Naive thymus-derived CD4-positive, alpha-beta T cell (primary cell): ENCODE measurements at regions of chr1 and their contacts with region 1.

Region 1: DNA sequence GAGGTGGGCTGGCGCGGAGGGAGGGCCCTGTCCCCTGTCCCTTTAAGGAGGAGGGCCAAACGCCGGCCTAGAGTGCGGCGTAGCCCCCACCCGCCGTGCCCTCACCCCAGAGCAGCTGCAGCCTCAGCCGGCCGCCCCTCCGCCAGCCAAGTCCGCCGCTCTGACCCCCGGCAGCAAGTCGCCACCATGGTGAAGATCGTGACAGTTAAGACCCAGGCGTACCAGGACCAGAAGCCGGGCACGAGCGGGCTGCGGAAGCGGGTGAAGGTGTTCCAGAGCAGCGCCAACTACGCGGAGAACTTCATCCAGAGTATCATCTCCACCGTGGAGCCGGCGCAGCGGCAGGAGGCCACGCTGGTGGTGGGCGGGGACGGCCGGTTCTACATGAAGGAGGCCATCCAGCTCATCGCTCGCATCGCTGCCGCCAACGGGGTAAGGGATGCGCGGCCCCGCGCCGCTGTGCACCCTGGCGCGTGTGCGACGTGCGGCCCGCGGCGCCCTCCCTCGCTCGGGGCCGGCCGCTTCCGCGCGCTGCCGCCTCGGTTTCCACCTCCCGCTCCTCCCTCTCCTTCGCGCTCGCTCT is at the start of gene PGM1:
- DNase-seq: peak; percentile 63 to 81 (median 76)
- ATAC-seq: peak; percentile 91
- H3K4me3 ChIP-seq: peak within 1 kb of the TSS; percentile 71
- H3K4me3 Mint-ChIP-seq: peak within 1 kb of the TSS; percentile 96 to 99 (median 98)
- H3K27ac ChIP-seq: peak within 1 kb of the TSS; percentile 90
- H3K27ac Mint-ChIP-seq: peak within 1 kb of the TSS; percentile 95 to 99 (median 99)
- H3K4me1 ChIP-seq: peaks cover 0 to 7% of the 10 kb centered on the region in 2 donors
- H3K4me1 Mint-ChIP-seq: peaks cover 21 to 49% (median 40%) of the 10 kb centered on the region in 7 donors
- H3K27me3 ChIP-seq: no peaks in the 10 kb centered on the region
- H3K27me3 Mint-ChIP-seq: no peaks in the 10 kb centered on the region
- total RNA-seq, gene PGM1: 11.9 to 57.2 (median 16.1) TPM

Region 2: DNA sequence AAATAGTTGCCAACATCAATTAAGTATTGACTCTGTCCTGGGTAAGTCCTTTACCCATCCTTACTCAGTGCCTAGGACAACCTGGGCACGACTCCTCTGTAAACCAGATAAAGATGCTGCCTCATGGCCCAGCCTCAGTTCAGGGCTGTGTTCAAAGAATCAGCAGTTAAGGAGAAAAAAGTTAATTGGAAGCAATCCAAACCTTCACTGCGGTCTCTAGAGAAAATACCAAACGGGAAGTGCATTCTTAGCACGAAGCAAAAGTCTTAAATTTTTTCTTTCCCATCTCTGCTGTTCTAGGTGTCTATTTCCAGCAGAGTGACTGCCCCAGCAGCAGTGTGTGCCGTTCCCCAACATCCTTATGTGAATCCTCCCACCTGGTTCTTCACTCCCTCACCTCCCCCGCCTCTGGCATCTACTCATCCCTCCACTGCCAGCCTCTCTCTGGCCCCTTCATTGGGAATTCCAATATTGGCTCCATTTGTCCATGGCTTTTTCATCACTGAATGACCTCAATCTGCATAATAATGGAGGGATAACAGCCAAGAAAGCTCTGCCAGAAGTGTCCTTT is 1297.4 kb before region 1 on chr1:
- CTCF ChIA-PET with region 1: no interaction called
- POLR2A ChIA-PET with region 1: no interaction called
- intact Hi-C with region 1: loop called in 1 of 2 experiments (anchors 10 kb)
- DNase-seq: peak in 7 of 9 donors; percentile 10 to 67 (median 51)
- ATAC-seq: peak; percentile 78
- H3K4me3 ChIP-seq: no peak overlapping the region
- H3K4me3 Mint-ChIP-seq: peak overlapping the region in 9 of 10 donors; percentile 8 to 72 (median 64)
- H3K27ac ChIP-seq: no peak overlapping the region
- H3K27ac Mint-ChIP-seq: peak overlapping the region in 7 of 9 donors; percentile 4 to 79 (median 34)
- H3K4me1 ChIP-seq: peaks cover 0 to 11% of the 10 kb centered on the region in 2 donors
- H3K4me1 Mint-ChIP-seq: peaks cover 9 to 16% (median 13%) of the 10 kb centered on the region in 7 donors
- H3K27me3 ChIP-seq: no peaks in the 10 kb centered on the region
- H3K27me3 Mint-ChIP-seq: no peaks in the 10 kb centered on the region

Region 3: GRCh38 chr1:63367215-63368103 is 225.9 kb before region 1 on chr1 and contains the start of gene ALG6:
- CTCF ChIA-PET with region 1: no interaction called
- POLR2A ChIA-PET with region 1: interaction called, 3 read pairs
- intact Hi-C with region 1: loop called (anchors 1 kb)
- DNase-seq: peak; percentile 66 to 98 (median 84)
- ATAC-seq: peak; percentile 99
- H3K4me3 ChIP-seq: peak within 1 kb of the TSS; percentile 95
- H3K4me3 Mint-ChIP-seq: peak within 1 kb of the TSS; percentile 91 to 99 (median 94)
- H3K27ac ChIP-seq: peak within 1 kb of the TSS; percentile 72
- H3K27ac Mint-ChIP-seq: peak within 1 kb of the TSS; percentile 79 to 93 (median 84)
- H3K4me1 ChIP-seq: peaks cover 0 to 7% of the 10 kb centered on the region in 2 donors
- H3K4me1 Mint-ChIP-seq: peaks cover 23 to 46% (median 36%) of the 10 kb centered on the region in 7 donors
- H3K27me3 ChIP-seq: no peaks in the 10 kb centered on the region
- H3K27me3 Mint-ChIP-seq: peaks cover 0 to 7% (median 0%) of the 10 kb centered on the region in 5 donors
- total RNA-seq, gene ALG6: 16.1 to 29.8 (median 27.3) TPM

Region 4: GRCh38 chr1:63403386-63403785 is 190.0 kb before region 1 on chr1:
- CTCF ChIA-PET with region 1: no interaction called
- POLR2A ChIA-PET with region 1: no interaction called
- intact Hi-C with region 1: no loop called
- DNase-seq: no peak
- ATAC-seq: peak; percentile 70
- H3K4me3 ChIP-seq: no peak overlapping the region
- H3K4me3 Mint-ChIP-seq: no peak overlapping the region
- H3K27ac ChIP-seq: no peak overlapping the region
- H3K27ac Mint-ChIP-seq: no peak overlapping the region
- H3K4me1 ChIP-seq: no peaks in the 10 kb centered on the region
- H3K4me1 Mint-ChIP-seq: peaks cover 0 to 5% (median 0%) of the 10 kb centered on the region in 7 donors
- H3K27me3 ChIP-seq: no peaks in the 10 kb centered on the region
- H3K27me3 Mint-ChIP-seq: no peaks in the 10 kb centered on the region

Region 5: GRCh38 chr1:63522891-63523728 is 70.3 kb before region 1 on chr1 and contains the starts of genes EFCAB7 and ITGB3BP:
- CTCF ChIA-PET with region 1: no interaction called
- POLR2A ChIA-PET with region 1: interaction called, 3 read pairs
- intact Hi-C with region 1: loop called (anchors 1 kb)
- DNase-seq: peak; percentile 73 to 86 (median 82)
- ATAC-seq: peak; percentile 92
- H3K4me3 ChIP-seq: peak within 1 kb of the TSS; percentile 83
- H3K4me3 Mint-ChIP-seq: peak within 1 kb of the TSS; percentile 82 to 100 (median 98)
- H3K27ac ChIP-seq: peak within 1 kb of the TSS; percentile 78
- H3K27ac Mint-ChIP-seq: peak within 1 kb of the TSS; percentile 93 to 99 (median 97)
- H3K4me1 ChIP-seq: peaks cover 7 to 13% of the 10 kb centered on the region in 2 donors
- H3K4me1 Mint-ChIP-seq: peaks cover 12 to 47% (median 36%) of the 10 kb centered on the region in 7 donors
- H3K27me3 ChIP-seq: no peaks in the 10 kb centered on the region
- H3K27me3 Mint-ChIP-seq: peaks cover 0 to 2% (median 0%) of the 10 kb centered on the region in 5 donors
- total RNA-seq, gene EFCAB7: 4.1 to 13.5 (median 9.2) TPM
- total RNA-seq, gene ITGB3BP: 16.5 to 52.6 (median 32.9) TPM

Region 6: GRCh38 chr1:63575340-63575826 is 18.0 kb before region 1 on chr1:
- CTCF ChIA-PET with region 1: interaction called, 5 read pairs
- POLR2A ChIA-PET with region 1: no interaction called
- intact Hi-C with region 1: loop called (anchors 1 to 2 kb)
- DNase-seq: peak in 6 of 9 donors; percentile 12 to 40 (median 24)
- ATAC-seq: peak; percentile 52
- H3K4me3 ChIP-seq: no peak overlapping the region
- H3K4me3 Mint-ChIP-seq: no peak overlapping the region
- H3K27ac ChIP-seq: no peak overlapping the region
- H3K27ac Mint-ChIP-seq: no peak overlapping the region
- H3K4me1 ChIP-seq: no peaks in the 10 kb centered on the region
- H3K4me1 Mint-ChIP-seq: no peaks in the 10 kb centered on the region
- H3K27me3 ChIP-seq: no peaks in the 10 kb centered on the region
- H3K27me3 Mint-ChIP-seq: no peaks in the 10 kb centered on the region

Region 7: GRCh38 chr1:64553281-64553680 is 959.9 kb after region 1 on chr1:
- CTCF ChIA-PET with region 1: no interaction called
- POLR2A ChIA-PET with region 1: no interaction called
- intact Hi-C with region 1: loop called in 1 of 2 experiments (anchors 5 kb)
- DNase-seq: peak in 2 of 9 donors; percentile 12 to 16
- ATAC-seq: no peak
- H3K4me3 ChIP-seq: no peak overlapping the region
- H3K4me3 Mint-ChIP-seq: peak overlapping the region in 3 of 10 donors; percentile 6 to 18 (median 18)
- H3K27ac ChIP-seq: no peak overlapping the region
- H3K27ac Mint-ChIP-seq: peak overlapping the region in 7 of 9 donors; percentile 4 to 91 (median 70)
- H3K4me1 ChIP-seq: peaks cover 0 to 25% of the 10 kb centered on the region in 2 donors
- H3K4me1 Mint-ChIP-seq: peaks cover 20 to 81% (median 57%) of the 10 kb centered on the region in 7 donors
- H3K27me3 ChIP-seq: no peaks in the 10 kb centered on the region
- H3K27me3 Mint-ChIP-seq: peaks cover 0 to 57% (median 0%) of the 10 kb centered on the region in 5 donors